ENCODE measurements at regions of chr11 and their contacts with region 1.

Region 1: DNA sequence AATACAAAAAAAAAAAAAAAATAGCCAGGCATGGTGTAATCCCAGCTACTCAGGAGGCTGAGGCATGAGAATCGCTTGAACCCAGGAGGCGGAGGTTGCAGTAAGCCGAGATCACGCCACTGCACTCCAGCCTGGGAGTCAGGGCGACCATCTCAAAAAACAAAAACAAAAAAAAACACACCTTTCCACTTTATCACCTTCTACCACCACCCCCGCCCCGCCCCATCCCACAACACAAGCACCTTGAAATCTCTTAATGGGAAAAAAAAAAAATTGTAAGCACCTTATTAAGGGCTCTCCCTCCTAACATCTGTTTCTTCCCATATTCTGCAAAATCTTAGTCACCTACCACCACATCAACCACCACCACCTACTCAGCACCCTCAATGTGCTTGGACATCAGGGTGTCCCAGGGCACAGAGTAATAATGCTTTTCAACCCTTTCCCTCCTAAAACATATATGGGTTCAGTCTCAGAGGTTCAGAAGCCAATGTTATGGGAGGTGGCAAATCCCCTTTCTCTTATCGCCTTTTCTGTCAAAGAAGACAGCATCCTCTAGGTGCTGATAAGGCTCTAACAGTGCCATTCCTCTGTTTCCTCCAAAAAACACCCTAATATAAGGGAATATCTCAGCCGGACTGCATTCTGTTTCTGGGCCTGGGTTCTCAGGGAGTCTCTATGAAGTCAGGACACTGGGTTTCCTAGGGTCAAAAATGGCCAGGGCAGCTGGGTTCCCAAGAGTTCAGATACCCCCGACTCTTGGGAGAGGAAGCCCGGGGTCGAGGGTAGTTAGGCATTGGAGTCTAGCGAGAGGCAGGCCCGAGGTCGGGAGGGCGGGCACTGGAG is 718 bp downstream of the INTS5 start:
- DNase-seq: peak in 4 of 14 experiments; percentile 43 to 62 (median 51)
- ATAC-seq: peak; percentile 5
- H3K4me3 ChIP-seq: peak overlapping the region; percentile 96
- H3K4me3 Mint-ChIP-seq: peak overlapping the region; percentile 94
- H3K27ac ChIP-seq: peak overlapping the region; percentile 89 to 94
- H3K27ac Mint-ChIP-seq: peak overlapping the region; percentile 97
- H3K4me1 ChIP-seq: peaks cover 28% of the 10 kb centered on the region
- H3K4me1 Mint-ChIP-seq: peaks cover 17% of the 10 kb centered on the region
- H3K27me3 ChIP-seq: no peaks in the 10 kb centered on the region
- H3K27me3 Mint-ChIP-seq: no peaks in the 10 kb centered on the region
- CTCF ChIP-seq: no peak

Region 2: GRCh38 chr11:62612366-62613290 is 39.8 kb before region 1 on chr11 and contains the starts of genes EML3 and ROM1:
- CTCF ChIA-PET with region 1: interaction called, 5 read pairs
- POLR2A ChIA-PET with region 1: interaction called, 8 read pairs
- intact Hi-C with region 1: loop called in 1 of 2 experiments (anchors 5 kb)
- DNase-seq: peak; percentile 77 to 94 (median 89)
- ATAC-seq: peak; percentile 76
- H3K4me3 ChIP-seq: peak within 1 kb of the TSS; percentile 92
- H3K4me3 Mint-ChIP-seq: peak within 1 kb of the TSS; percentile 90
- H3K27ac ChIP-seq: peak within 1 kb of the TSS; percentile 78 to 90
- H3K27ac Mint-ChIP-seq: peak within 1 kb of the TSS; percentile 94
- H3K4me1 ChIP-seq: peaks cover 63% of the 10 kb centered on the region
- H3K4me1 Mint-ChIP-seq: peaks cover 44% of the 10 kb centered on the region
- H3K27me3 ChIP-seq: no peaks in the 10 kb centered on the region
- H3K27me3 Mint-ChIP-seq: no peaks in the 10 kb centered on the region
- CTCF ChIP-seq: peak; percentile 87
- total RNA-seq, gene EML3: 142 to 144 TPM
- total RNA-seq, gene ROM1: 0.42 to 0.71 TPM

Region 3: GRCh38 chr11:62621567-62622470 is 30.6 kb before region 1 on chr11 and contains the start of gene B3GAT3:
- CTCF ChIA-PET with region 1: no interaction called
- POLR2A ChIA-PET with region 1: interaction called, 36 read pairs
- intact Hi-C with region 1: loop called (anchors 1 to 2 kb)
- DNase-seq: peak; percentile 91 to 99 (median 95)
- ATAC-seq: peak; percentile 82
- H3K4me3 ChIP-seq: peak within 1 kb of the TSS; percentile 69
- H3K4me3 Mint-ChIP-seq: peak within 1 kb of the TSS; percentile 95
- H3K27ac ChIP-seq: peak within 1 kb of the TSS; percentile 86 to 88
- H3K27ac Mint-ChIP-seq: peak within 1 kb of the TSS; percentile 89
- H3K4me1 ChIP-seq: peaks cover 32% of the 10 kb centered on the region
- H3K4me1 Mint-ChIP-seq: peaks cover 27% of the 10 kb centered on the region
- H3K27me3 ChIP-seq: no peaks in the 10 kb centered on the region
- H3K27me3 Mint-ChIP-seq: no peaks in the 10 kb centered on the region
- CTCF ChIP-seq: no peak
- total RNA-seq, gene B3GAT3: 47.2 to 49.5 TPM

Region 4: GRCh38 chr11:62678770-62679696 is 26.6 kb after region 1 on chr11 and contains the start of gene UBXN1:
- CTCF ChIA-PET with region 1: no interaction called
- POLR2A ChIA-PET with region 1: interaction called, 9 read pairs
- intact Hi-C with region 1: loop called in 1 of 2 experiments (anchors 1 kb)
- DNase-seq: peak; percentile 68 to 93 (median 76)
- ATAC-seq: peak; percentile 84
- H3K4me3 ChIP-seq: peak within 1 kb of the TSS; percentile 100
- H3K4me3 Mint-ChIP-seq: peak within 1 kb of the TSS; percentile 91
- H3K27ac ChIP-seq: peak within 1 kb of the TSS; percentile 97
- H3K27ac Mint-ChIP-seq: peak within 1 kb of the TSS; percentile 87
- H3K4me1 ChIP-seq: peaks cover 33% of the 10 kb centered on the region
- H3K4me1 Mint-ChIP-seq: peaks cover 46% of the 10 kb centered on the region
- H3K27me3 ChIP-seq: no peaks in the 10 kb centered on the region
- H3K27me3 Mint-ChIP-seq: no peaks in the 10 kb centered on the region
- CTCF ChIP-seq: no peak
- total RNA-seq, gene UBXN1: 196 to 222 TPM

Measured in CD4-positive, alpha-beta T cell (primary cell).